Transverse colon (tissue), 4 donors: ENCODE measurements at regions of chr22 and their contacts with region 1.

Region 1: GRCh38 chr22:36387752-36388518 is at the start of gene MYH9:
- DNase-seq: peak; percentile 100
- H3K4me3 ChIP-seq: peak within 1 kb of the TSS; percentile 53 to 99 (median 94)
- H3K27ac ChIP-seq: peak within 1 kb of the TSS; percentile 96 to 100 (median 98)
- H3K4me1 ChIP-seq: peaks cover 16 to 69% (median 45%) of the 10 kb centered on the region in 4 donors
- H3K27me3 ChIP-seq: no peaks in the 10 kb centered on the region
- CTCF ChIP-seq: no peak
- EP300 ChIP-seq: no peak
- POLR2A ChIP-seq: peak; percentile 97
- total RNA-seq, gene MYH9: 385 to 511 (median 460) TPM

Region 2: DNA sequence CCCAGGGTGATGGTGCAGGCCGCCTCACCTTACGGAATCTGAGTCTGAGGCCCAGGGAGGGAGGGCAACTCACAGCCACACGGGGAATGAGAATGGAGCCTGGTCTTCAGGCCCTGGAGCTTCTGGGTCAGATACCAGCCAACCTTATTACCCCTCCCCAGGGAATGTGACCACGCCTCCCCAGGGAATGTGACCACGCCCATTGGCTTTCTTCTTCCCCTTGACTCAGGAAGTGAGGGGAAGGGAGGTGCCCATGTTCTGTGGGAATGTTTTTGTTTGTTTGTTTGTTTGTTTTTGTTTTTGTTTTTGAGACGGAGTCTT is 301.8 kb before region 1 on chr22:
- in situ Hi-C with region 1: no loop called
- intact Hi-C with region 1: no loop called
- DNase-seq: no peak
- H3K4me3 ChIP-seq: no peak overlapping the region
- H3K27ac ChIP-seq: no peak overlapping the region
- H3K4me1 ChIP-seq: no peaks in the 10 kb centered on the region
- H3K27me3 ChIP-seq: no peaks in the 10 kb centered on the region
- CTCF ChIP-seq: no peak
- EP300 ChIP-seq: no peak
- POLR2A ChIP-seq: no peak

Region 3: DNA sequence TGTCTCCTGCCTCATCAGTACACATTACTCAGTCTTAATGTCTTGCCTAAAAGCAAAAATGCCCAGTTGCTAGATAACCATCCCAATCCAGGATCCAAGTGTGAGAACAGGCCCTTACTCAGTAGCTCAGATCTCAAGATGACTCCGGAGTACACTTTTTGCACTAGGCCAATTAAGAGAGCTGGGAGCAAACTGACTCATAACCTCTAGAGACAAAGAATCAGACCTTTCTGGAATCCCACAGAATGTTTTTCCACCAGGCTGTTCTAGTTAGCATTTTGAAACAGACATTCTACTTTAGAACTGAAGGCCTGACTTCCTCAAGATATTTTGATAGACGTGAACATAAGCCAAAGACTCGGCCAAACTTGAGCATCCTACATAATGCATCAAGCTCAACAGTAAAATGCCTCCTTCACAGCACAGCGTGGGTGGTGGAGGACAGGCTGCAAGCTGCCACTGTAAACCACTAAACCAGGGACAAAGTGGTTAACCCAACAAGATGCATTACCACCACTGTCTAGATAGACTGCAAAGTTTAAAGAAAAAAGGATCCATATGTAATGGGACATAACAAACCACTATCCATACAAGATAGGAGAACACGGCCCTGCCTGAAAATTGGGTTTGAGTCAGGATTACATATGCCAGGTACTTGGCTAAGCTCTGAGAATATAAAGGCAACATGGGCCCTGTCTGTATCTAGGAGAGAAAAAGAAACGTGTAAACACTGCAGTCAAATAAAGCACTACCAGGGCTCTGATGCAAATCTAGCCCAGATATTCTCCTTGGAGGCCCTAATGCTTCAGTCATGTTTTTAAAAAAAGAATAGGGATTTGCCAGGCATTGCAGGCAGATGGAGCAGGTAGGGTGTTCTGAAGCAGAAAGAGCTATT is 48.5 kb before region 1 on chr22:
- in situ Hi-C with region 1: no loop called
- intact Hi-C with region 1: loop called (anchors 1 kb)
- DNase-seq: no peak
- H3K4me3 ChIP-seq: no peak overlapping the region
- H3K27ac ChIP-seq: peak overlapping the region; percentile 92 to 99 (median 96)
- H3K4me1 ChIP-seq: peaks cover 55 to 88% (median 57%) of the 10 kb centered on the region in 4 donors
- H3K27me3 ChIP-seq: no peaks in the 10 kb centered on the region
- CTCF ChIP-seq: no peak
- EP300 ChIP-seq: no peak
- POLR2A ChIP-seq: no peak

Region 4: DNA sequence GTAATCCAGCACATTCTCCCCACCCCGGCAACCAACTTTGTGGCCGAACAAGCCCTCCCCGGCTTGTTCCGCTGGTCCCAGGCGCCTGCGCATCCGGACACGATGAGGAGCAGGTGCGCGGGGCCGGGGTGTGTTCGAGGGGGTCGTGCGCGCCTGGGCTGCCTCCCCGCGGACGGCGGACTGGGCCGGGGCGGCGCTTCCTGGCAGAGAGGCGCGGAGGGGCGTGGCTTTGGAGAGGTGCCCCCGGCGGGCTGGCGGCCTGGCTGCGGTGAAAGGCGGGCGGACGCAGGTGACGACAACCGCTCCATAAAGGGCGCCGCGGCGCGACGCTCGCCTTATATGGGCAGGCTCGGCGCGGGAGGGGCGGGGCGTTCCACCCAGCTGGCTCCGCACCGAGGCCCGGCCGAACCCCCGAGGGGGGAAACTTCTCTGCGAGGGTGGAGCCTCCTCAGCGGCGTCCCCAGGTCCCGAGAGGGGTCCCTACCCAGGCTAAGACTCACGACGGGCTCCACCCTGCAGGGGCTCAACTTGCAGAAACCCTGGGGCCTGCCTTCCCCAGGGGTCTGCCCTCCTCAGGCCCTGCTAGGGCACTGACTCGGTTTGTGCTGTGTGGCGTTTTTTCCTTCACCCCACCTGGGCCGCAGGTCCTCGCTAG is 67.1 kb after region 1 on chr22:
- in situ Hi-C with region 1: loop called in 1 of 4 experiments (anchors 10 kb)
- intact Hi-C with region 1: loop called (anchors 5 kb)
- DNase-seq: peak; percentile 98
- H3K4me3 ChIP-seq: peak overlapping the region; percentile 47 to 55 (median 50)
- H3K27ac ChIP-seq: peak overlapping the region; percentile 98
- H3K4me1 ChIP-seq: peaks cover 50 to 77% (median 67%) of the 10 kb centered on the region in 4 donors
- H3K27me3 ChIP-seq: no peaks in the 10 kb centered on the region
- CTCF ChIP-seq: peak in 1 of 5 experiments; percentile 38
- EP300 ChIP-seq: peak; percentile 63
- POLR2A ChIP-seq: peak; percentile 93

Region 5: DNA sequence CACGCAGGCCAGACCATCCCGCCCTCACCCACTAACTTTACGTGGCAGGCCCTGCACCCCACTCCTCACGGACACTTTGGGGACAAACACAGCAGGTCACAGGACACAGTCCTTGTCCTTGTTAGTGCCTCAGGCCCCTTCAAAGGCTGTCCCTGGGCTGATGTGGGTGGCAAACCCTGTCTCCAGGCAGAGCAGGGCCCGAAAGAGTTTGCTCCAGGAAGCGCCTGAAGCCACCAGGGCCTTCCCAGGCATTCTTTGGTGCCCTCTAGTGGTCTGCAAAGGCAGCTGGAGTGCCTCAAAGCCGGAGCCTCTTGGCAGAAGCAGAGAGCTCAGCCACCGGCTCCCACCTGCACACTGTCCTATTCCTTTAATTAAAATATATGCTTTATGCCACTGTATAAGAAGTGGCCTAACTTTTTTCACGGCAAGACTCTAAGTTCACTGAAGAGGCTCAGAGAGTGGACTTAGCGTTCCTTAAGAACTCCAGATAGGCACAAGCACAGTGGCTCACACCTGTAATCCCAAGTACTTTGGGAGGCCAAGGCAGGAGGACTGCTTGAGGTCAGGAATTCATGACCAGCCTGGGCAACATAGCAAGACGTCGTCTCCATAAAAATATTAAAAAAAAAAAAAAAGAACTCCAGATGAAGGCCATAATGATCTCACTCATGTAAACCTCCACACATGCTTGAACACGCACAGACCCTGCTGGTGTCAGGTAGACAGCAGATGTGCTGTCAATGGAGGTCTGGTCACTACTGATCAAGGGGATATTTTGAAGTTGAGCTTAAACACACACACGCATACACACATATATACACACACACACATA is 82.4 kb after region 1 on chr22:
- in situ Hi-C with region 1: no loop called
- intact Hi-C with region 1: loop called (anchors 2 kb)
- DNase-seq: peak; percentile 87
- H3K4me3 ChIP-seq: no peak overlapping the region
- H3K27ac ChIP-seq: peak overlapping the region; percentile 98
- H3K4me1 ChIP-seq: peaks cover 20 to 51% (median 30%) of the 10 kb centered on the region in 4 donors
- H3K27me3 ChIP-seq: no peaks in the 10 kb centered on the region
- CTCF ChIP-seq: peak; percentile 92 to 95 (median 94)
- EP300 ChIP-seq: no peak
- POLR2A ChIP-seq: no peak